Vagina (tissue), 2 donors: ENCODE measurements at regions of chr12 and their contacts with region 1.

Region 1: GRCh38 chr12:121697098-121697698 is 15.4 kb upstream of the TMEM120B start:
- DNase-seq: no peak
- H3K4me3 ChIP-seq: no peak overlapping the region
- H3K27ac ChIP-seq: no peak overlapping the region
- H3K4me1 ChIP-seq: no peaks in the 10 kb centered on the region
- H3K27me3 ChIP-seq: no peaks in the 10 kb centered on the region
- CTCF ChIP-seq: peak; percentile 45 to 71 (median 66)
- POLR2A ChIP-seq: no peak

Region 2: GRCh38 chr12:121537814-121538698 is 159.1 kb before region 1 on chr12:
- intact Hi-C with region 1: no loop called
- DNase-seq: no peak
- H3K4me3 ChIP-seq: peak overlapping the region; percentile 53 to 72
- H3K27ac ChIP-seq: peak overlapping the region; percentile 90
- H3K4me1 ChIP-seq: peaks cover 43% of the 10 kb centered on the region
- H3K27me3 ChIP-seq: no peaks in the 10 kb centered on the region
- CTCF ChIP-seq: no peak
- POLR2A ChIP-seq: no peak

Region 3: DNA sequence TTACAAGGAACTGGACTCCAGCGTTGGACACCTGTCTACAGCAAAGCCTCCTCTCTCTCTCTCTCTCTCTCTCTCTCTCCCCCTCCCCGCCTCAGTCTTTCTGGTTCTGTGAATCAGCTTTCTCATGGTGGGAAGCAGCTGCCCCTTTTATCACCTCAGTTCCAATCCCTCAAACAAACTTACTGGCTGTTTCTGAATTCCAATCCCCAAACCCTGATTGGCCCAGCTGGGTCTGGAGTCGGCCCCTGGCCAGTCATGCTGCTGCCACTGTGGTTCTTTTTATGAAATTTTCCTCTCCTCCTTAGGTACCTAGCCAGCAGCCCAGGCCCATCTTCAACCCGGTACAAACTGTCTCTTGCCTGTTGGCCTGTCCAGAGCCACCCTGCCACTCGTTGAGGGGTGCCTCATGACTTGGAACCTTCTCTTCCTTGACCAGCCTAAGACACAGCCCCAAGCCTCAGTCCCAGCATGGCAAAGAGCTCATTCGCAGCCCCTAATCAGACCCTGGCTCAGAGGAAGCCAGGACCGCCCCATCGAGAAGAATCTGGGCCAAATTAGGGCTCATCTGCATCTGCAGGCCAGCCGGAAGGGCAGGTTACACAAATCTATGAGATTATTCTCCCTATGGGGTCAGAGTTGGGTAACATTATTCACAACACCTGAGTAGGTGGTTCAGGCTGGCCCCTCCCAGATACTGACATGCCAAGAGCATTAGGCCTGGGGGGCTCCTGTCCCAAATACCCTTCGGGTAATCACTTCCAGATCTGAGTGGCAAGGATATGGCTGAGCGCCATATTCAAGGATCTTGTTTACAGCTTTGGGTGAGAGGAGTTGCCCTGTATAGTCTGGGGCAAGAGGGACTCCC is 18.2 kb before region 1 on chr12:
- intact Hi-C with region 1: no loop called
- DNase-seq: no peak
- H3K4me3 ChIP-seq: no peak overlapping the region
- H3K27ac ChIP-seq: no peak overlapping the region
- H3K4me1 ChIP-seq: no peaks in the 10 kb centered on the region
- H3K27me3 ChIP-seq: no peaks in the 10 kb centered on the region
- CTCF ChIP-seq: no peak
- POLR2A ChIP-seq: no peak

Region 4: DNA sequence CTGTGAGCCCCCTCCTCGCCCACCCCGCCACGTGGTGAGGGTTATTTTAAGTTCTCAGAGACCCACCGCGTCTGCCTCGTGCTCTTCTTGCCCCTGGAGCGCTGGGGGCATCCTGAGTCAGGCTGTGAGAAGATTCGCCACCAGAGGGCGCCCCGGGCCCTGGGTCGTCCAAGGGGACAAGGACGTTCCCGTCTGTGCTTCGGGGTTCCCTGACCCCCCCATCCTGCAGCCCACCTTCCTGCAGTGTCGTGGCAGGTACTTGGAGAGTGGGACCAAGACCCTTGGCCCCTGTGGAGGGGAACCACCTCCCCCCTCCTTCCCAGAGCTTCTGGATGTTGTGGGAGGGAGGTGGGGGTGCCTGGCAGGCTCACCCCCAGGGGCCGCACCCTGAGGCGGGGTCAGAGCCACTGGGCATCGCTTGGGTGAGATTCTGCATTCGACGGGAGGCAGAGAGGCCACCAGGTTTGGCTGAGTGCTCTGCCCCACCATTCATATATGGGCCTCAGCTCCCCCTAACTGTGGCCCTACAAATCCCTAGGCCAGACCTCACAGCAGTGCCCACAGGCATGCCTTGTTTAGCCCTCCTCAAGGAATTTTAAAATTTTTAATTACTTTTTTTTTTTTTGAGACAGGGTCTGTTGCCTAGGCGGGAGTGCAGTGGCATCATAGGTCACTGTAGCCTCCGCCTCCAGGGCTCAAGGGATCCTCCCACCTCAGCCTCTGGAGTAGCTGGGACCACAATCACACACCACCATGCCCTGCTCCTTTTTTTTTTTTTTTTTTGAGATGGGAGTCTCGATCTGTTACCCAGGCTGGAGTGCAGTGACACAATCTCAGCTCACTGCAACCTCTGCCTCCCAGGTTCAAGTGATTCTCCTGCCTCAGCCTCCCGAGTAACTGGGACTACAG is 79.2 kb after region 1 on chr12:
- intact Hi-C with region 1: loop called (anchors 5 kb)
- DNase-seq: no peak
- H3K4me3 ChIP-seq: no peak overlapping the region
- H3K27ac ChIP-seq: peak overlapping the region; percentile 72
- H3K4me1 ChIP-seq: peaks cover 5% of the 10 kb centered on the region
- H3K27me3 ChIP-seq: no peaks in the 10 kb centered on the region
- CTCF ChIP-seq: peak; percentile 69 to 78 (median 73)
- POLR2A ChIP-seq: no peak

Region 5: GRCh38 chr12:122021822-122022526 is 324.8 kb after region 1 on chr12 and contains the start of gene BCL7A:
- intact Hi-C with region 1: no loop called
- DNase-seq: no peak
- H3K4me3 ChIP-seq: peak within 1 kb of the TSS; percentile 70 to 87
- H3K27ac ChIP-seq: peak within 1 kb of the TSS; percentile 89
- H3K4me1 ChIP-seq: peaks cover 30% of the 10 kb centered on the region
- H3K27me3 ChIP-seq: no peaks in the 10 kb centered on the region
- CTCF ChIP-seq: no peak
- POLR2A ChIP-seq: peak in 1 of 2 donors; percentile 30
- total RNA-seq, gene BCL7A: 8.1 TPM

Region 6: GRCh38 chr12:122646517-122647217 is 949.5 kb after region 1 on chr12:
- intact Hi-C with region 1: no loop called
- DNase-seq: no peak
- H3K4me3 ChIP-seq: no peak overlapping the region
- H3K27ac ChIP-seq: no peak overlapping the region
- H3K4me1 ChIP-seq: no peaks in the 10 kb centered on the region
- H3K27me3 ChIP-seq: no peaks in the 10 kb centered on the region
- CTCF ChIP-seq: no peak
- POLR2A ChIP-seq: no peak